ENCODE measurements at regions of chr17 and their contacts with region 1.

Region 1: DNA sequence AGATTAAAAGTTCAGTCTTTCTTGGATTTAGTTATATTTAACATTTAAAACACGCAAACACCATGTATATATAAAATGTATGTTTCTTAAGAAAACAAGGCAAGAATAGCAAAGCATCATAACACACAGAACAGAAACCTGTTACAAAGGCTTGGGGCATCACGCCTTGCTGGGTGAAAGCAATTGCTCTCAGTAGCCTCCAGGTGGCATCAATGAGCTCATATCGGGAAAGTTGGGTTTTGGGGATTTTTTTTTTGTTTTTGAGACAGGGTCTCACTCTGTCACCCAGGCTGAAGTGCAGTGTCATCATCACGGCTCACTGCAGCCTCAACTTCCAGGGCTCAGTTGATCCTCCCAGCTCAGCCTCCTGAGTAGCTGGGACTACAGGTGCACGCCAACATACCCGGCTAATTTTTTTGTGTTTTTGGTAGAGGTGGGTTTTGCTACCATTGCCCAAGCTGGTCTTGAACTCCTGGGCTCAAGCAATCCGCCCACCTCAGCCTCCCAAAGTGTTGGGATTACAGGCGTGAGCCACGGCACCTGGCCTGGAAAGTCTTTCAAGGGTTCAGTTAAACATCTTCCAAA is 56.9 kb downstream of the CYB5D2 start:
- DNase-seq: no peak

Region 2: GRCh38 chr17:4394208-4395110 is 194.5 kb after region 1 on chr17:
- intact Hi-C with region 1: no loop called
- DNase-seq: no peak

Region 3: DNA sequence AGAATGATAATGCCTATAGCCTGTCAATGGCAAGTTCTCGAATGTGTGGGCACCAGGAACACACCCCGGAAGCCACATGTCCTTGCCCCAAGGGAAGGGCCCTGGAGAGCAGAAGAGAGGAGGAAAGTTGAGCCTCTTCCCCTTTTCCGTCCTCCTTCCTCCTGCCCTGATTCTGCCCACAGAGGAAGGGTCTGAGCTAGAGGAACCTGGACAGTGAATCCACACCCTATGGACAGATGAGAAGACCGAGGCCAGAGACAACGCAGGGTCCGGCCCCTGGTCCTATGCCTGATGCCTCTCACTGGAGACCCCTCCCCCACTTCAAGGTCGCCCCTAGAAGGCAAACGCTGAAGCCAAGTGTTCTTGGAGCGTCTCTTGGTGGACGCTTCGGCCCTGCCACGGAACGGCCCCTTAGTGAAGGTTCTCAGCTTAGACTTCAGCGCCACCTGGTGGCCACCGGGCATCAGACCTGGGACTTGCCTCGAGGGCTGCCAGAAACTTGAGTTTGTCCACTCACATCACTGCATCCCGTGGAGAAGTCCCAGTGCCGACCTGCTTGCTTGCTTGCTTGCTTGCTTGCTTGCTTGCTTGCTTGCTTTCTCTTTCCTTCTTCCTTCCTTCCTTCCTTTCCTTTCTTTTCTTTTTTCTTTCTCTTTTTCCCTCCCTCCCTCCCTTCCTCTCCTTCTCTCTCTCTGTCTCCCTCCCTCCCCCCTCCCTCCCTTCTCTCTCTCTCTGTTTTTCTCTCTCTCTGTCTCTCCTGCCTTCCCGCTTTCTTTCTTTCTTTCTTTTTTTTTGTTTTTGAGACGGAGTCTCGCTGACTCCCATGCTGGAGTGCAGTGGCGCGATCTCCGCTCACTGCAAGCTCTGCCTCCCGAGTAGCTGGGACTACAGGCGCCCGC is 213.3 kb after region 1 on chr17:
- intact Hi-C with region 1: loop called (anchors 1 kb)
- DNase-seq: peak; percentile 95

Measured in cardiac septum (tissue), 1 donor.